ENCODE measurements at regions of chr17 and their contacts with region 1.

Region 1: DNA sequence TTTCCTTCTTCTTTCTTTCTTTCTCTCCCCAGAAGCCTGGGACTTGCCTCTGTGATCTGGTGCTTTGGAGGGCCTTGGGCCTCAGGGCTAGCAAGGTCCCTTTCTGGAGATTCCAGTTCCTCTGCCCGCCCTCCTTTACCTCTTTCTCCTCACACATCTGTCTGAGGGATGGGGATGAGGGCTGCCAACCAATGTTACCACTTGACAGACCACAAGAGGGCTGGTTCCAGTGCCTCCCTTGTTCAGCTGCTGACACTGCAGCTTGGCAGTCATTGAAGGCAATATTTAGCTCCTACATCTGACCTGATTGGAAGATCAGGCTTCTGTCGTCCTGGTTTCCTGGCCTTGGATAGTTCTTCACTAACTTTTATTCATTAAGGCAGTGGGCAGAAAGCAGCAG is 3.6 kb upstream of the ZNF652 start:
- DNase-seq: peak; percentile 57
- H3K4me3 ChIP-seq: no peak overlapping the region
- H3K27ac ChIP-seq: no peak overlapping the region
- H3K4me1 ChIP-seq: peaks cover 0 to 6% of the 10 kb centered on the region in 2 experiments; a peak in 1 of 4 replicates
- H3K27me3 ChIP-seq: no peaks in the 10 kb centered on the region
- CTCF ChIP-seq: peak; percentile 37; the same call in 1 of the 2 replicates
- EP300 ChIP-seq: no peak
- RAD21 ChIP-seq: peak; percentile 36; the same call in 1 of the 2 replicates

Region 2: GRCh38 chr17:49381063-49381462 is 15.4 kb after region 1 on chr17:
- CTCF ChIA-PET with region 1: interaction called, 21 read pairs
- POLR2A ChIA-PET with region 1: no interaction called
- DNase-seq: no peak
- H3K4me3 ChIP-seq: no peak overlapping the region
- H3K27ac ChIP-seq: no peak overlapping the region
- H3K4me1 ChIP-seq: peaks cover 0 to 10% of the 10 kb centered on the region in 2 experiments; a peak in 1 of 4 replicates
- H3K27me3 ChIP-seq: no peaks in the 10 kb centered on the region
- CTCF ChIP-seq: no peak
- EP300 ChIP-seq: no peak
- RAD21 ChIP-seq: no peak

Region 3: GRCh38 chr17:49390548-49391324 is 25.1 kb after region 1 on chr17:
- CTCF ChIA-PET with region 1: interaction called, 12 read pairs
- POLR2A ChIA-PET with region 1: no interaction called
- DNase-seq: no peak
- H3K4me3 ChIP-seq: no peak overlapping the region
- H3K27ac ChIP-seq: no peak overlapping the region
- H3K4me1 ChIP-seq: no peaks in the 10 kb centered on the region; a peak in 1 of 4 replicates
- H3K27me3 ChIP-seq: no peaks in the 10 kb centered on the region
- CTCF ChIP-seq: no peak
- EP300 ChIP-seq: no peak
- RAD21 ChIP-seq: no peak